HEK293T (cell line): ENCODE measurements at regions of chr10 and their contacts with region 1.

Region 1: DNA sequence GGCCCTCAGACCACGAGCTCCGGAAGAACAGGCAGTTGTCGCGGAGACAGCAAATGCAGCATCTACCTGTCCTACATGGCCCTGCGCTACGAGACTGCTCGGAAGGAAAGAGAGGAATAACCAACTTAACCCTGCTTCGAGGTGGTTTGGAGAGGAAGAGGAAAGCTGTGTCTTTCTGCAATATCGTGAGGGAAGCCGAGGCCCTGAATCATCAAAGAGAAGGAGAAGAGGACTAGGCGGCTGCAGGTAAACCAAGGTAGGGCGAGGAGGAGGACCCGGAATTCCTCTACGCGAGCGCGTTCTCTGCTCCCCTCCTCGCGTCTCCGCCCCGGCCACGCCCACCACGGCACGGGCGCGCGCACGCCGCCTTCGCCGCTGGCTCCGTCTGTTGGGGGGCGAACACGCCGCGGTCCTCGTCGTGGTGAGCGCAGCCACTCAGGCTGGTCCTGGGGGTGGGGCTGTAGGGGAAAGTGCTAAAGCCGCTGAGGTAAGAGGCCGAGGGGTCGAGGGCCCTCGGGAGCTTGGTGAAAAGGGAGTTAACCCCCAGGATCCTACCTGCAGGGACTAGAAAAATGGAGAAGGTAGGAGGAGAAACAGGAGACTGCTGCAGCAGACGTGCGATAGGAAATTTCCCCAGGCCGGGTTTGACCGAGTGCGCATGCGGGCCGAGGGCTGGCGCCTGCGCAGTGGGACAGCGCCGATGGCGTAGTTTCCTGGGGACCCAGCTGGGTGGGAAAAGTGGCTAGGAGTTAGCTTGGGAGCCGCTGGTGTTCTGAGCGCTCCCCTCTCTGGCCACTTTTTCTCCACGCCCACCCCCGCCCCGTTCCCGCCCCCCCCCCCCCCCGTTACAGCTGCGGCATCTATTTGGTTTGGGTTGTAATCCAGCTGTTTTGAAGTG is at the starts of genes ANAPC16 and ASCC1:
- DNase-seq: peak; percentile 90

Region 2: DNA sequence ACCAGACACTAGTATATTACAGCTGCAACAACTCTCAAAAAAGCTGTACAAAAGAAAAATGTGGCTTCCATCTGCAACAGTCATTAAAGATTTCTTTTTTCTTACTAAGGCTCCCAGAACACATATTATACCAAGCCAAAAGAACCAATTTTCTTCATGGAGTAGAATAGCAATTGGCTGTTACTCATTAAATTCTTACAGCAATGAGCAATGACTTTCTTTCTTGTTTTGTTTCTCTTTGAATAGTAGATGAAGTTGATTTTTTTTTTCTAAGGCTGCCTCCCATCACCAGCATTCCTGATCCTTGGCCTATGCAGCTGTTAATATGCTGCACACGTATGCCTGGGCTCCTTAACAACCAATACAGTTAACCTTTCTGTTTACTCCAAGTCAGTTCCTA is 90.9 kb before region 1 on chr10:
- CTCF ChIA-PET with region 1: interaction called, 11 read pairs
- POLR2A ChIA-PET with region 1: interaction called, 5 read pairs
- DNase-seq: no peak

Region 3: GRCh38 chr10:72173635-72174296 is 42.1 kb before region 1 on chr10:
- CTCF ChIA-PET with region 1: no interaction called
- POLR2A ChIA-PET with region 1: interaction called, 17 read pairs
- DNase-seq: peak; percentile 45

Region 4: DNA sequence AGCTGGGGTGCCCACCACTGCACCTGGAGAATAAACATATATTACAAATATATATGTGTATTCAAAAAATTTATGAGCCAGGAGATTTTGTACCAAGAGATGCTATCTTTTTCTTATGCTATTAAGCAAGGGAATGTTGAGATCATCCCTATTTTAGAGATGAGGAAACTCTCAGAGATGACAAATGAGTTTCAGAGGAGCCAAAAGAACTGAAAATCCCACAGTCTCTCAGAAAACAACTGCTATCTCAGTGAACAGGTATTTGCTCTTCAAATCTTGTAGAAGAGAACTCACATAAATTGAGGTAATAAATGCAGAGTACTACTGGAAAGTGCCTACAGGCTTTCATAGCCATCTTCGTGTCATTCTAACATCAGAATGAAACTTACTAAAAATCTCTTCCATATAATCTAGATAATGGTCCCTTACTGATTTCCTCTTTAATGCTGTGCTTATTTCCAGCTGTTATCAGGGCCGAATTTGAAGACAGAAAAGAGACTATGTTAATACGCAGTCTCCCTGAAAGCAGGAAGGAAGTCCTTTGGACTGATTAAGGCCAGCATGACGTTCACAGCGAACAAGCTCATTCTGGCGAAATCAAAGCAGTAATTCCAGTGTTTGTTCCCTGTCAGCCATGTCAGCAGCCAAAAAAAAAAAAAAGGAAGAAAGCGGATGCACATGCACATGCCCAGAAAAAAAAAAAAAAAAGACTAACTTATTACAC is 29.5 kb before region 1 on chr10:
- CTCF ChIA-PET with region 1: no interaction called
- POLR2A ChIA-PET with region 1: no interaction called
- DNase-seq: no peak